ENCODE measurements at regions of chr12 and their contacts with region 1.

Region 1: GRCh38 chr12:50066433-50066832 is 9.0 kb downstream of the ASIC1 start:
- DNase-seq: peak; percentile 61
- H3K4me3 ChIP-seq: no peak overlapping the region
- H3K27ac ChIP-seq: no peak overlapping the region
- H3K27me3 ChIP-seq: no peaks in the 10 kb centered on the region
- CTCF ChIP-seq: no peak

Region 2: GRCh38 chr12:50055831-50056638 is 10.4 kb before region 1 on chr12:
- CTCF ChIA-PET with region 1: interaction called, 30 read pairs
- POLR2A ChIA-PET with region 1: no interaction called
- DNase-seq: no peak
- H3K4me3 ChIP-seq: no peak overlapping the region
- H3K27ac ChIP-seq: no peak overlapping the region
- H3K27me3 ChIP-seq: peaks cover 32% of the 10 kb centered on the region
- CTCF ChIP-seq: peak; percentile 99

Region 3: GRCh38 chr12:50419511-50419909 is 353.1 kb after region 1 on chr12:
- CTCF ChIA-PET with region 1: no interaction called
- POLR2A ChIA-PET with region 1: no interaction called
- DNase-seq: no peak
- H3K4me3 ChIP-seq: no peak overlapping the region
- H3K27ac ChIP-seq: no peak overlapping the region
- H3K27me3 ChIP-seq: no peaks in the 10 kb centered on the region
- CTCF ChIP-seq: no peak